ENCODE measurements at regions of chr1 and their contacts with region 1.

Region 1: GRCh38 chr1:112706908-112707663 is at the start of gene RHOC:
- DNase-seq: peak; percentile 84 to 90
- H3K4me3 ChIP-seq: peak within 1 kb of the TSS; percentile 87
- H3K27ac ChIP-seq: peak within 1 kb of the TSS; percentile 89
- H3K4me1 ChIP-seq: peaks cover 41% of the 10 kb centered on the region
- H3K27me3 ChIP-seq: no peaks in the 10 kb centered on the region
- CTCF ChIP-seq: peak; percentile 93
- total RNA-seq, gene RHOC: 200 and 220 TPM in 2 replicates

Region 2: DNA sequence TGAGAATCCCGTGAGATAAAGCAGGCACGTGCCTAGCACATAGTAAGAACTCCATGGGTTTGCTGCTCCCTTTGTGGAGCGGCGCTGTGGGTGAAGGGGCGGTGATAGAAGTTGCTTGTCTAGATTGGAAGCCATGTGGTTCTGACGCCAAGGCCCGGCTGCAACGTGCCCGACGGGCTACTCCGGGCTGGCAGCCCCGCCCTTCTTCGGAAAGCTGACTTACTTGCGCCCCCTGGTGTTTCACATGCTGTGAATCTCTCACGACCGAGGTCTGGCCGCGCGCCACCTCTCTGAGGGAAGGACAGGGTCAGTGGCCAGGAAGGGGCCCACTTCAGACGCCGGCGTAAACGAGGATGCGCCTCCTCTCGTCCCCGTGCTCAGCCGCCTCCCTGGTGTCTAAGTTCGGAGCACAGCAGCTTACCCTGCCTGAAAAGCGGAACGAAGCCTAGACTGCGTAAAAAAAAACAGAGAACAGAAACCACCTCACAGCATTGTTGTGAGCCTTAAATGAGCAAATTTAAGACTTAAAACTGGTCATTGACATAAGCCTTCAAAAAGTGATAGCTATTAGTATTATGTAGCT is 240.9 kb before region 1 on chr1:
- CTCF ChIA-PET with region 1: no interaction called
- POLR2A ChIA-PET with region 1: no interaction called
- intact Hi-C with region 1: loop called (anchors 10 kb)
- DNase-seq: peak; percentile 85 to 89
- H3K4me3 ChIP-seq: peak overlapping the region; percentile 54
- H3K27ac ChIP-seq: no peak overlapping the region
- H3K4me1 ChIP-seq: peaks cover 40% of the 10 kb centered on the region
- H3K27me3 ChIP-seq: no peaks in the 10 kb centered on the region
- CTCF ChIP-seq: peak; percentile 98

Region 3: GRCh38 chr1:112619520-112620376 is 87.3 kb before region 1 on chr1 and contains the start of gene CAPZA1:
- CTCF ChIA-PET with region 1: interaction called, 3 read pairs
- POLR2A ChIA-PET with region 1: no interaction called
- intact Hi-C with region 1: loop called (anchors 1 kb)
- DNase-seq: peak; percentile 81 to 83
- H3K4me3 ChIP-seq: peak within 1 kb of the TSS; percentile 96
- H3K27ac ChIP-seq: peak within 1 kb of the TSS; percentile 86
- H3K4me1 ChIP-seq: peaks cover 37% of the 10 kb centered on the region
- H3K27me3 ChIP-seq: no peaks in the 10 kb centered on the region
- CTCF ChIP-seq: no peak
- total RNA-seq, gene CAPZA1: 101 and 145 TPM in 2 replicates

Region 4: GRCh38 chr1:112686835-112687234 is 20.3 kb before region 1 on chr1:
- CTCF ChIA-PET with region 1: no interaction called
- POLR2A ChIA-PET with region 1: interaction called, 10 read pairs
- intact Hi-C with region 1: no loop called
- DNase-seq: no peak
- H3K4me3 ChIP-seq: no peak overlapping the region
- H3K27ac ChIP-seq: no peak overlapping the region
- H3K4me1 ChIP-seq: no peaks in the 10 kb centered on the region
- H3K27me3 ChIP-seq: no peaks in the 10 kb centered on the region
- CTCF ChIP-seq: no peak

Measured in PC-9 (cell line).